Heart left ventricle (tissue), 16 donors: ENCODE measurements at regions of chr16 and their contacts with region 1.

Region 1: GRCh38 chr16:55478827-55479429 is at the start of gene MMP2:
- DNase-seq: peak; percentile 78 to 88 (median 80)
- ATAC-seq: peak; percentile 68 to 82 (median 76)
- H3K4me3 ChIP-seq: peak within 1 kb of the TSS; percentile 34 to 78 (median 66)
- H3K27ac ChIP-seq: peak within 1 kb of the TSS; percentile 56 to 94 (median 83)
- H3K4me1 ChIP-seq: peaks cover 0 to 45% (median 13%) of the 10 kb centered on the region in 12 donors
- H3K27me3 ChIP-seq: peaks cover 0 to 22% (median 0%) of the 10 kb centered on the region in 9 donors
- CTCF ChIP-seq: peak in 1 of 12 donors; percentile 3
- POLR2A ChIP-seq: no peak
- total RNA-seq, gene MMP2: 59.1 to 157 (median 77.2) TPM

Region 2: DNA sequence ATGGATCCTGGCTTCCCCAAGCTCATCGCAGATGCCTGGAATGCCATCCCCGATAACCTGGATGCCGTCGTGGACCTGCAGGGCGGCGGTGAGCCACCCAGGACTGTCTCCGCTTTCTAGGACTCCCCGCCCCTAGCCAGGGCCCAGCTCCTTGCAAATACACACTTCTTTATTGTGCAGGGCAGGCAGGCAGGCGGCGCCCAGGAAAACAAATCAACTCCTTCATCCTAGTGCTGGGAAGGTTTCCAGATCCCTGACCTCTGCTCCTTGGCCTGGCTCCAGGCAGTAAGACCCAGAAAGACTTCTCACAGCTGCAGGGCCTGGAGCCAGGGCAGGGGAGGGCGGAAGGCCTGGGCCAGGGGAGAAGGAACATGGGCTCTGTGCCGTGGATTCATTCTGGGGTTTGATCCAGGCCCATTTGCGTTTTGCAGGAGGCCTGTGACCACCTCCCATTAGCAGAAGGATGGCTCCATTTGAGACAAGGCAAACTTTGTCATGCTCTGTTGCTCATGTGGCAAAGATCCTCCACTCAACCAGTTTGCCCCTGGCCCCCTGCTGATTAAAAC is 24.0 kb after region 1 on chr16:
- intact Hi-C with region 1: loop called in 1 of 10 experiments (anchors 2 kb)
- DNase-seq: peak; percentile 88 to 93 (median 89)
- ATAC-seq: peak; percentile 71 to 85 (median 81)
- H3K4me3 ChIP-seq: no peak overlapping the region
- H3K27ac ChIP-seq: peak overlapping the region in 9 of 12 donors; percentile 26 to 74 (median 41)
- H3K4me1 ChIP-seq: peaks cover 10 to 55% (median 41%) of the 10 kb centered on the region in 12 donors
- H3K27me3 ChIP-seq: no peaks in the 10 kb centered on the region
- CTCF ChIP-seq: peak in 4 of 12 donors; percentile 19 to 35 (median 25)
- POLR2A ChIP-seq: no peak